CD14-positive monocyte (primary cell): ENCODE measurements at regions of chr16 and their contacts with region 1.

Region 1: GRCh38 chr16:73058221-73058615 is 10.3 kb upstream of the ZFHX3 start:
- DNase-seq: peak; percentile 50 to 71 (median 63)
- H3K4me3 ChIP-seq: peak overlapping the region; percentile 77 to 96 (median 88)
- H3K4me3 Mint-ChIP-seq: peak overlapping the region; percentile 94 to 95
- H3K27ac ChIP-seq: peak overlapping the region in 1 of 2 donors; percentile 56
- H3K27ac Mint-ChIP-seq: peak overlapping the region in 6 of 7 donors; percentile 35 to 81 (median 50)
- H3K4me1 ChIP-seq: peaks cover 62 to 77% of the 10 kb centered on the region in 2 donors
- H3K4me1 Mint-ChIP-seq: peaks cover 73% of the 10 kb centered on the region
- H3K27me3 ChIP-seq: peaks cover 32 to 36% of the 10 kb centered on the region in 2 donors
- H3K27me3 Mint-ChIP-seq: peaks cover 49 to 64% (median 49%) of the 10 kb centered on the region in 3 donors
- CTCF ChIP-seq: no peak

Region 2: GRCh38 chr16:72832621-72833248 is 225.5 kb before region 1 on chr16:
- intact Hi-C with region 1: loop called in 1 of 2 experiments (anchors 5 kb)
- DNase-seq: peak; percentile 64 to 68 (median 66)
- H3K4me3 ChIP-seq: no peak overlapping the region
- H3K4me3 Mint-ChIP-seq: no peak overlapping the region
- H3K27ac ChIP-seq: no peak overlapping the region
- H3K27ac Mint-ChIP-seq: peak overlapping the region in 2 of 7 donors; percentile 14 to 45
- H3K4me1 ChIP-seq: no peaks in the 10 kb centered on the region
- H3K4me1 Mint-ChIP-seq: peaks cover 5% of the 10 kb centered on the region
- H3K27me3 ChIP-seq: no peaks in the 10 kb centered on the region
- H3K27me3 Mint-ChIP-seq: peaks cover 0 to 4% (median 0%) of the 10 kb centered on the region in 3 donors
- CTCF ChIP-seq: peak; percentile 97

Region 3: GRCh38 chr16:72856797-72857196 is 201.4 kb before region 1 on chr16:
- intact Hi-C with region 1: loop called in 1 of 2 experiments (anchors 10 kb)
- DNase-seq: peak in 1 of 3 donors; percentile 20
- H3K4me3 ChIP-seq: no peak overlapping the region
- H3K4me3 Mint-ChIP-seq: no peak overlapping the region
- H3K27ac ChIP-seq: no peak overlapping the region
- H3K27ac Mint-ChIP-seq: no peak overlapping the region
- H3K4me1 ChIP-seq: peaks cover 34 to 35% of the 10 kb centered on the region in 2 donors
- H3K4me1 Mint-ChIP-seq: peaks cover 35% of the 10 kb centered on the region
- H3K27me3 ChIP-seq: no peaks in the 10 kb centered on the region
- H3K27me3 Mint-ChIP-seq: peaks cover 0 to 1% (median 0%) of the 10 kb centered on the region in 3 donors
- CTCF ChIP-seq: peak; percentile 53

Region 4: GRCh38 chr16:73068541-73069401 is 10.6 kb after region 1 on chr16:
- intact Hi-C with region 1: loop called in 1 of 2 experiments (anchors 1 kb)
- DNase-seq: peak; percentile 93 to 97 (median 96)
- H3K4me3 ChIP-seq: peak overlapping the region in 1 of 3 experiments; percentile 47
- H3K4me3 Mint-ChIP-seq: peak overlapping the region; percentile 51 to 81
- H3K27ac ChIP-seq: peak overlapping the region; percentile 94 to 99
- H3K27ac Mint-ChIP-seq: peak overlapping the region; percentile 99 to 100 (median 100)
- H3K4me1 ChIP-seq: peaks cover 79 to 80% of the 10 kb centered on the region in 2 donors
- H3K4me1 Mint-ChIP-seq: peaks cover 77% of the 10 kb centered on the region
- H3K27me3 ChIP-seq: peaks cover 15 to 38% of the 10 kb centered on the region in 2 donors
- H3K27me3 Mint-ChIP-seq: peaks cover 35 to 60% (median 39%) of the 10 kb centered on the region in 3 donors
- CTCF ChIP-seq: no peak

Region 5: GRCh38 chr16:73086108-73086507 is 27.9 kb after region 1 on chr16:
- intact Hi-C with region 1: loop called in 1 of 2 experiments (anchors 5 kb)
- DNase-seq: peak; percentile 79 to 92 (median 92)
- H3K4me3 ChIP-seq: peak overlapping the region in 1 of 3 experiments; percentile 42
- H3K4me3 Mint-ChIP-seq: peak overlapping the region in 1 of 2 donors; percentile 59
- H3K27ac ChIP-seq: peak overlapping the region in 1 of 2 donors; percentile 80
- H3K27ac Mint-ChIP-seq: peak overlapping the region; percentile 80 to 91 (median 85)
- H3K4me1 ChIP-seq: peaks cover 34 to 46% of the 10 kb centered on the region in 2 donors
- H3K4me1 Mint-ChIP-seq: peaks cover 33% of the 10 kb centered on the region
- H3K27me3 ChIP-seq: no peaks in the 10 kb centered on the region
- H3K27me3 Mint-ChIP-seq: peaks cover 2 to 3% (median 3%) of the 10 kb centered on the region in 3 donors
- CTCF ChIP-seq: no peak

Region 6: DNA sequence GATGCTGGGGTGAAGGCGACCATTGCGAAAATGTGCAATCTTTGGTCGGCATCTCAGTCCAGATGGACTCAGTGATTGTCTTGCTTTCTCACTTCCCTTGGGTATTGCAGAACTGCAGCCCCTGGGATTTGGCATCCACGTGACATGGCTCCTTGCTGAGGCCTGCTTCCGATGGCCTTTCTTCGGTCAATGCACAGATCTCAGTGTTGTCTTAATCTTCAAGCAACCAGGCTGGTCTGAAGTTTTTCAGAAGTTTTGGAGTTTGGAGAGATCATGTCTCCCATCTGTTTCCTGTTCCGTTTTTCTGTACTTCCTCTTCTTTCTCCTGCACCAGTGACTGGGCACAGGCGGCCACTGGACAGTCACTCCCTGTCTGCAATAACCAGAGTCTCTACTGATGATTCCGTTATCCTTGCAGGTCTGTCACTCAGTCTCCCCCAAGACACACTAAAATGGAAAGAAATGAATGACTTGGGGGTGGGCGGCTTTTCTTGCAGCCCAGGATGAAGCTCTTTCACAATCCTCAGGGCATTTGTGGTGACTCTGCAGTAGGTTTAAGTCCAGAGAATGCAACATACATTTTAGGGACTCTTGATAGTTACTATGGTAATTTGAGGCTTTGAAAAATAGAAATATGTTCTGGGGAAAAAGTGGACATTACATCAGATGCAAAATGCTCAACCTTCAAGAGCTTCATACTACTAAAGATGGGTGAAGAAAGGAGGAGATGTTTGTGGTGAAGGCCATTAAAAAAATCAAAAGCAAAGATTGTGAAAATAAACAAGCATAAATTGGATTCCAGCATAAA is 96.0 kb after region 1 on chr16:
- intact Hi-C with region 1: loop called in 1 of 2 experiments (anchors 1 kb)
- DNase-seq: peak; percentile 91 to 95 (median 93)
- H3K4me3 ChIP-seq: peak overlapping the region in 1 of 3 experiments; percentile 35
- H3K4me3 Mint-ChIP-seq: peak overlapping the region; percentile 16 to 64
- H3K27ac ChIP-seq: peak overlapping the region; percentile 84 to 92
- H3K27ac Mint-ChIP-seq: peak overlapping the region; percentile 93 to 98 (median 97)
- H3K4me1 ChIP-seq: peaks cover 65 to 66% of the 10 kb centered on the region in 2 donors
- H3K4me1 Mint-ChIP-seq: peaks cover 69% of the 10 kb centered on the region
- H3K27me3 ChIP-seq: no peaks in the 10 kb centered on the region
- H3K27me3 Mint-ChIP-seq: peaks cover 0 to 2% (median 2%) of the 10 kb centered on the region in 3 donors
- CTCF ChIP-seq: no peak